Body of pancreas (tissue), 4 donors: ENCODE measurements at regions of chr6 and their contacts with region 1.

Region 1: GRCh38 chr6:41591859-41592502 is 45.8 kb downstream of the FOXP4 start:
- DNase-seq: peak; percentile 71 to 82 (median 78)
- ATAC-seq: peak; percentile 75
- H3K4me3 ChIP-seq: no peak overlapping the region
- H3K27ac ChIP-seq: no peak overlapping the region
- H3K4me1 ChIP-seq: no peaks in the 10 kb centered on the region
- H3K27me3 ChIP-seq: no peaks in the 10 kb centered on the region
- CTCF ChIP-seq: peak; percentile 85 to 98 (median 91)
- POLR2A ChIP-seq: no peak

Region 2: GRCh38 chr6:41424370-41425058 is 167.5 kb before region 1 on chr6:
- intact Hi-C with region 1: loop called (anchors 5 kb)
- DNase-seq: peak; percentile 87 to 92 (median 89)
- ATAC-seq: peak; percentile 48
- H3K4me3 ChIP-seq: no peak overlapping the region
- H3K27ac ChIP-seq: peak overlapping the region in 3 of 4 donors; percentile 12 to 38 (median 24)
- H3K4me1 ChIP-seq: peaks cover 22% of the 10 kb centered on the region
- H3K27me3 ChIP-seq: no peaks in the 10 kb centered on the region
- CTCF ChIP-seq: peak; percentile 82 to 89 (median 87)
- POLR2A ChIP-seq: no peak

Region 3: DNA sequence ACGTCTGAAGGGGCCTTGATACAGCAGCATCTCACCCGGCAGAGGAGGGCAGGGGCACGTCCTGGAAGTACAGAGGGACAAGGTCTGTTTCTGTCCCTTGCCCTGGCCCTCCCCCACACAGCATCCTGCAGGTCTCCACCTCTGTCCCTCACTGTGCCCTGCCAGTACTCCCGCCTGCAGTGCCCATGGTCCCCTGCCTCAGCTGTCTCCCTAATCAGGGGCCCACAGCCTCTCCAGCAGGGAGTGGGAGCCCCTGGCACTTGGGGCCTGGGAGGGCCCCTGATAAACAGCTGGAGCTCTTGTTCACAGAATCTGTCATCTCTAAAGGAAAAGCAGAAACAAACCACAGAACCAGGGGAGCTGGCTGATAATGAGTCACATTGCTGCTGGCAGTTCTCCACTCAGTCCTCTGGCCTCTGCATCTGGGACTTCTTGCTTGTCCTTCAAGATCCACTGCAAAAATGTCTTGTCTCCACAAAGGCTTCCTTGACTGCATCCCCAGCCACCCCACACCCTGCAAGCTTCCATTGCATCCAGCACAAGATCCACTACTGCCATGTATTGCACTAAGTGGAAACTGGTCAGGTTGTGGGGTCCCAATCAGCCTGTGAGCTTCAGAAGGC is 425.2 kb after region 1 on chr6:
- intact Hi-C with region 1: no loop called
- DNase-seq: peak in 1 of 4 donors; percentile 39
- ATAC-seq: no peak
- H3K4me3 ChIP-seq: no peak overlapping the region
- H3K27ac ChIP-seq: no peak overlapping the region
- H3K4me1 ChIP-seq: no peaks in the 10 kb centered on the region
- H3K27me3 ChIP-seq: no peaks in the 10 kb centered on the region
- CTCF ChIP-seq: no peak
- POLR2A ChIP-seq: no peak